Activated CD4-positive, alpha-beta memory T cell treated with anti-CD3 and anti-CD28 coated beads for 36 hours (primary cell): ENCODE measurements at regions of chr16 and their contacts with region 1.

Region 1: GRCh38 chr16:27235055-27235937 is 32.0 kb downstream of the KDM8 start:
- DNase-seq: peak; percentile 92
- H3K4me3 Mint-ChIP-seq: peak overlapping the region; percentile 59
- H3K27ac Mint-ChIP-seq: peak overlapping the region; percentile 99
- H3K4me1 Mint-ChIP-seq: peaks cover 94% of the 10 kb centered on the region
- H3K27me3 Mint-ChIP-seq: no peaks in the 10 kb centered on the region

Region 2: DNA sequence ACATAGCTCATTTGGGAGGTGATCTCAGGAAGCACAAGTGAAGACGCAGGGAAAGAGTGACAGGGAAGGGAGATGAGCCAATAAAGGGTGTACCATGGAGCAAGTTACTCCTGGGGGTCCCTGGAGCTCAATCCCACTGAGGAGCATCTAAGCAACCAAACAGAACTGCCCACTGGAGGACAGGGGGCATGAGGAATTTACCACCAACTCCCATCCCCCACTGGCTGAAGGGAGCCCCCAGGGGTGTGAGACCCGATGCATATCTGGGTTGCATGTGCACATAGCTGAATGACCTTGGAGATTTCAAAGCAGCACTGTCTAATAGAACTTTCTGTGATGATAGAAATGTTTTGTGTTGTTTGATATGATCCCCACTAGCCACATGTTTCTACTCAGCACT is 138.9 kb before region 1 on chr16:
- CTCF ChIA-PET with region 1: no interaction called
- POLR2A ChIA-PET with region 1: no interaction called
- intact Hi-C with region 1: no loop called
- DNase-seq: no peak
- H3K4me3 Mint-ChIP-seq: no peak overlapping the region
- H3K27ac Mint-ChIP-seq: no peak overlapping the region
- H3K4me1 Mint-ChIP-seq: no peaks in the 10 kb centered on the region
- H3K27me3 Mint-ChIP-seq: peaks cover 7% of the 10 kb centered on the region

Region 3: GRCh38 chr16:27179500-27180072 is 55.7 kb before region 1 on chr16:
- CTCF ChIA-PET with region 1: interaction called, 30 read pairs
- POLR2A ChIA-PET with region 1: no interaction called
- intact Hi-C with region 1: loop called (anchors 1 kb)
- DNase-seq: peak; percentile 94
- H3K4me3 Mint-ChIP-seq: peak overlapping the region; percentile 39
- H3K27ac Mint-ChIP-seq: peak overlapping the region; percentile 48
- H3K4me1 Mint-ChIP-seq: peaks cover 36% of the 10 kb centered on the region
- H3K27me3 Mint-ChIP-seq: no peaks in the 10 kb centered on the region

Region 4: GRCh38 chr16:27268376-27269299 is 33.3 kb after region 1 on chr16 and contains the start of gene NSMCE1:
- CTCF ChIA-PET with region 1: interaction called, 32 read pairs
- POLR2A ChIA-PET with region 1: interaction called, 13 read pairs
- intact Hi-C with region 1: loop called (anchors 1 kb)
- DNase-seq: peak; percentile 98
- H3K4me3 Mint-ChIP-seq: peak within 1 kb of the TSS; percentile 89
- H3K27ac Mint-ChIP-seq: peak within 1 kb of the TSS; percentile 92
- H3K4me1 Mint-ChIP-seq: peaks cover 64% of the 10 kb centered on the region
- H3K27me3 Mint-ChIP-seq: no peaks in the 10 kb centered on the region
- total RNA-seq, gene NSMCE1: 120 to 121 TPM

Region 5: DNA sequence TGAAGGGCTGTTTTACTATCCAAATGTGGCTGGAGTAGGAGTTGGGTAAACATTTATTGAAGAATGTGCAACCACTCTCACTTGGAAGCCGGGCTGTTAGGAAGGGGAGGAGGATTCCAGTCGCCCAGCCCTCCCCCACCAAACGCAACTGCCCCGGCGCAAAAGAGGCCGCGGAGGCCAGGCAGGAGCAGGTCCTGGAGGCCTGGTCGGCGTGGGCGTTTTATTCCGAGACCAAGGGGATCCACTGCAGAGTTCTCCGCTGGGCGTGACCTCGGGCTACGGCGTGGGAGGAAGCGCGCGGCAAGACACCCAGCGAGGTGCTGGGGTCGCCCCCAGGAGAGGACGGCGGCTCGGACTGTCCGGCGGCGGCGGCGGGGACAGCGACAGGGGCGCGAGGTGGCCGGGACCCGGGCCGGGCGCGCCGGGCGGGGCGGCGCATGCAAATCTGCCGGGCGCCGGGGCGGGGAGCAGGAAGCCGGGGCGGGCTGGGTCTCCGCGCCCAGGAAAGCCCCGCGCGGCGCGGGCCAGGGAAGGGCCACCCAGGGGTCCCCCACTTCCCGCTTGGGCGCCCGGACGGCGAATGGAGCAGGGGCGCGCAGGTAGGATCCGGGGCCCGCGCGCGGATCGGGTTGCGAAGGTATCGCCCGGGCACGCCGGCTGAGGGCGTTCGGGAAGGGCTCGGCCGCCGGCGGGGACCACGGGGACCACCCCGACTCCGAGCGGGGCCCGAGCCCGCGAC is 78.3 kb after region 1 on chr16 and contains the start of gene IL4R:
- CTCF ChIA-PET with region 1: interaction called, 113 read pairs
- POLR2A ChIA-PET with region 1: interaction called, 123 read pairs
- intact Hi-C with region 1: loop called (anchors 1 kb)
- DNase-seq: peak; percentile 86
- H3K4me3 Mint-ChIP-seq: peak within 1 kb of the TSS; percentile 94
- H3K27ac Mint-ChIP-seq: peak within 1 kb of the TSS; percentile 96
- H3K4me1 Mint-ChIP-seq: peaks cover 41% of the 10 kb centered on the region
- H3K27me3 Mint-ChIP-seq: no peaks in the 10 kb centered on the region
- total RNA-seq, gene IL4R: 146 to 153 TPM

Region 6: DNA sequence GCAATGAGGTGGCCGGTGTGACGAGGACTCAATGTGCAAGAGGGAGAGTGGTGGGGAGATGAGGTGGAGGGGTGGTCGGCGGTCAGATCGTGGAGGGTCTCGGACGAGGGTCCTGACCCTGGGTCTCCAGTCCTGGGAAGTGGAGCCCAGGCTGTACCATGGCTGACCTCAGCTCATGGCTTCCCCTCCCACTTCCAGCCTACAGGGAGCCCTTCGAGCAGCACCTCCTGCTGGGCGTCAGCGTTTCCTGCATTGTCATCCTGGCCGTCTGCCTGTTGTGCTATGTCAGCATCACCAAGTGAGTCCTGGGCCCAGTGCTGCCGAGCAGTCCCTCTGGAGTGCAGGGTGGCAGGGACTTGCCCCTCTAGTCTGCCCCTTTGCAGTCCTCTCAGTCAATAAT is 120.3 kb after region 1 on chr16:
- CTCF ChIA-PET with region 1: interaction called, 43 read pairs
- POLR2A ChIA-PET with region 1: no interaction called
- intact Hi-C with region 1: no loop called
- DNase-seq: peak; percentile 72
- H3K4me3 Mint-ChIP-seq: no peak overlapping the region
- H3K27ac Mint-ChIP-seq: peak overlapping the region; percentile 38
- H3K4me1 Mint-ChIP-seq: peaks cover 2% of the 10 kb centered on the region
- H3K27me3 Mint-ChIP-seq: no peaks in the 10 kb centered on the region

Region 7: DNA sequence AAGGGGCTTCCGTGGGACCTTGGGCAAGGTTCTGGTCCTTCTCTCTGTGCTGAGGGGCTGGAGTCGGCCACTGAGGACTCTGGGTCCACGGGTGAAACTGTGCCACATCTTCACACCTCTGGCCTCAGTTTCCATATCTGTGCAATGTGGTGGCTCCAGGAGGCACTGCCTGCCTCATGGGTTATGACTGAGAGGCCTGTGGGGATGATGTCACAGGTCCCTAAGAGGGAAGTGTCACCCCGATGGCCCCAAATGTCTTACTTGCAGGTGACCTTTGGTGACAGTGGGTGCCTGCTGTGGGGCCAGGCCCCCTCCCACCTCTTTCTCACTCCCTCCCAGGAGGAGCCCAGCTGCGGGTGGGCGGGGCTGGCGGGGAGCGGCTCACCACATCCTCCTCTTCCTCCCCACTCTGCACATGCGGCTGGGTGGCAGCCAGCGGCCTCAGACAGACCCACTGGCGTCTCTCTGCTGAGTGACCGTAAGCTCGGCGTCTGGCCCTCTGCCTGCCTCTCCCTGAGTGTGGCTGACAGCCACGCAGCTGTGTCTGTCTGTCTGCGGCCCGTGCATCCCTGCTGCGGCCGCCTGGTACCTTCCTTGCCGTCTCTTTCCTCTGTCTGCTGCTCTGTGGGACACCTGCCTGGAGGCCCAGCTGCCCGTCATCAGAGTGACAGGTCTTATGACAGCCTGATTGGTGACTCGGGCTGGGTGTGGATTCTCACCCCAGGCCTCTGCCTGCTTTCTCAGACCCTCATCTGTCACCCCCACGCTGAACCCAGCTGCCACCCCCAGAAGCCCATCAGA is 166.7 kb after region 1 on chr16 and contains the start of gene IL21R:
- CTCF ChIA-PET with region 1: interaction called, 15 read pairs
- POLR2A ChIA-PET with region 1: interaction called, 24 read pairs
- intact Hi-C with region 1: loop called (anchors 1 kb)
- DNase-seq: peak; percentile 93
- H3K4me3 Mint-ChIP-seq: peak within 1 kb of the TSS; percentile 100
- H3K27ac Mint-ChIP-seq: peak within 1 kb of the TSS; percentile 96
- H3K4me1 Mint-ChIP-seq: peaks cover 43% of the 10 kb centered on the region
- H3K27me3 Mint-ChIP-seq: no peaks in the 10 kb centered on the region
- total RNA-seq, gene IL21R: 55.0 to 55.9 TPM

Region 8: DNA sequence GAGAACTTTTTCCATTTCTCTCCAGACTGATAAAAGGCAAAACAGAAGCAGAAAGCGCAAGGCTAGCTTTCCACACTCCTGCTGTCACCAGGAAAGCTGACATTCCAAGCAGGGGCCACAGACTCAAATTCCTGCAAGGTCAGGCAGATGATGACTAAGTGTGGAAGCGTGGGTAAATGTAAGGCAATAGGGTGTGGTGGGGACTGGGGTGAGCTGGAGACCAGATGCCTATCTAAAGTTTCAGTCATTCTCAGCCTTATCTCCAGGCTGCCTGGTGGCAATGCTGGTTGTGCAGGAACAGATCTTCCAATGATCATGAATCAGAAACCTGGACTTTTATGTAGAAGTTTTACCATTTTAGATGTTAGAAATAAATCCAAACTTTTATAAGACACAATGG is 604.1 kb after region 1 on chr16:
- CTCF ChIA-PET with region 1: no interaction called
- POLR2A ChIA-PET with region 1: no interaction called
- intact Hi-C with region 1: no loop called
- DNase-seq: no peak
- H3K4me3 Mint-ChIP-seq: no peak overlapping the region
- H3K27ac Mint-ChIP-seq: no peak overlapping the region
- H3K4me1 Mint-ChIP-seq: no peaks in the 10 kb centered on the region
- H3K27me3 Mint-ChIP-seq: peaks cover 19% of the 10 kb centered on the region